GM10248 (cell line): ENCODE measurements at regions of chr10 and their contacts with region 1.

Region 1: DNA sequence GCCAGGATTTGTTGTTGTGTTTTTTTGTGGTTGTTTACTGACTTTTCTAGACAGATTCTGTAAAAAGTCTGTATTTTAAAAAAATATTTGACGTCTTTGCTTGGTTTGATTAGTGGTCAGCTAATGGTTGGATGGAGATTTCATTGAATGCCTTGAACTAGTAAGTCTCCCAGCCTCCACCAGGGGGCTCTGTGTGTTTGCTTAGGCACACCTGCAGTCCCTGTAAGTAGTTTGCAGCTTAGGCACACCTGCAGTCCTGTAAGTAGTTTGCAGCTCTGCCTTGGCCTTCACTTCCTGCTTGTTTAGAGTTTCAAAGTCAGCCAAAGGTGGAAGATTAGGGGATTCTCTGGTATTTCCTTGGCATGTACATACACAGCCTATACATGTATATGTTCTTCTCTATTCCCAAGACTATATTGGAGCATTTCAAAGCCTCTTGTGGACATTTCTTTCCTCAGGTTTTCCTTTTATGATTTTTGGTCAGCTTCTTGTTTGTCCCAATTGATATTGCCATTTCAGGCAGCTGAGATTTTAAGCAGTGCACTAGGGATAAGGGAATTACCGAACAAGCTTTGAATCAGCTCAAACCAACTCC is 101.6 kb downstream of the CCSER2 start:
- DNase-seq: peak; percentile 52
- CTCF ChIP-seq: peak; percentile 62

Region 2: DNA sequence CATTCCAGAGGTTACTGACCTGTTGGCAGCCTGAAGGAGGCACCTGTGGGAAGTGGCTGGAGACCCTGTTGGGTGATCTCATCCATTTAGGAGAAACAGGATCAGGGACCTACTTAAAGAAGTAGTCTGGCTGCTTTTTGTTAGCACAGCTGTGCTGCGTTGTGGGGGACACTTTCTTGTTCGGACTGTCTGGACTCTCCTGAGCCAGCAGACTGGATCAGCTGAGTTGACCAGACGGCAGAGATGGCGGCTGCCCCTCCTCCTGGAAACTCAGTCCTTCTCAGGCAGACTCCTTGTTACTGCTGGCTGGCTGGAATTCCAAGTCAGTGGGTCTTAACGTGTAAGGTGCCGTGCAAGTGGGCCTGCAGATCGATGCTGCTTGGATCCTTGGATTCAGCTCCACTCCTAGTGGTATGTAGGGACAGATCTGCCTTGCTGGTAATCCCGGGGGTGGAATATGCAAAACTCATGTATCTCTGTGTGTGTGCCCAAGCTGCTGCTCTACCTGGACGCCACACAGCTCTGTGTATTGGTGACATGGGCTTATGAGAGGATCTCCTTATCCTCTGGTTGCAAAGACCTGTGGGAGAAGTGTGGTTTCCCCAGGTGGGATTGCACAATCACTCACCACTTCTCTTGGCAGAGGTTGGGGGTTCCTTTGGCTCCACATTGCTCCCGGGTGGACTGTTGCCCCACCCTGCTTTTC is 14.3 kb before region 1 on chr10:
- CTCF ChIA-PET with region 1: interaction called, 10 read pairs
- POLR2A ChIA-PET with region 1: interaction called, 5 read pairs
- DNase-seq: no peak
- CTCF ChIP-seq: no peak

Region 3: GRCh38 chr10:84440781-84441180 is 10.8 kb after region 1 on chr10:
- CTCF ChIA-PET with region 1: interaction called, 19 read pairs
- POLR2A ChIA-PET with region 1: no interaction called
- DNase-seq: no peak
- CTCF ChIP-seq: no peak

Region 4: DNA sequence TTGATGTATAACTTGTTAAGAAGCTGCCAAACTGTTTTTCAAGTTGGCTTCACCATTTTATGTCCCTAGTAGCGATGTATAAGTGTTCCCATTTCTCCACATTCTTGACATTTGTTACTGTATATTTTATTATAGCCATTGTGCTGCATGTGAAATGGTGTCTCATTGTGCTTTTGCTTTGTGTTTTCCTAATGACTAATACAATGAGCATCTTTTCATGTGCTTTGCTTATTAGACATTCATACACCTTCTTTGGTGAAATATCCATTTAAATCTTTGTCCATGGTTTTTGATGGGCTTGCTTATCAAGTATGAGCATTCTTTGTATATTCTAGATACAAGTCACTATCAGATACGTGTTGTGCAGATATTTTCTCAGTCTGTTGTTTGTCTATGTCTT is 101.4 kb after region 1 on chr10:
- CTCF ChIA-PET with region 1: interaction called, 64 read pairs
- POLR2A ChIA-PET with region 1: no interaction called
- DNase-seq: no peak
- CTCF ChIP-seq: no peak

Region 5: DNA sequence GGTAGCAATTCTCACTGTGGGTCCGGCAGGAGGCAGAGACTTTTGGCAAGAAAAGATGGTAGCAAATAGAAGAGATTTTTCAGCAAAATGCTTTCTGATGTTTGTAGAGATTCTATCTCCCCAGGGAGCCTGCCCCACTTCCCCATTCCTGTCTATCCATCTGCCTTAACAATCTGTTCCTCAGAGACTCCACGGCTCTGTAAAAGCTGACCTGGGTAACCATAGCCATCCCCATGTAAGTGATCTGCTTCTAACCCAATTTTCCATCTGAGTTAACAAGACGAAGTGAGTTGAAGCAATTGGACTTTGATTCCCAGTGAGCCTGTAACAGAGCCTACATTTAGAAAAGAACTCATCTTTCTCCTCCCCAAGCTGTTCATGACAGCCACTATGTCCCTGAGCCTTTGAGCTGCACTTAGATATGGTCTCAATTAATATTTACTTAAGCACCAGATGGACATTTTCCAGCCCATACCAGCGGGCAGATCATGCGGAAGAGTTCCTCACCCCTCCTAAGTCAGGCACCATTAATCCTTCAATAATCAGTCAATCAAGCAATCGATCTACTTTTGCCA is 794.4 kb after region 1 on chr10:
- CTCF ChIA-PET with region 1: no interaction called
- POLR2A ChIA-PET with region 1: no interaction called
- DNase-seq: no peak
- CTCF ChIP-seq: no peak